ENCODE measurements at regions of chr21 and their contacts with region 1.

Region 1: DNA sequence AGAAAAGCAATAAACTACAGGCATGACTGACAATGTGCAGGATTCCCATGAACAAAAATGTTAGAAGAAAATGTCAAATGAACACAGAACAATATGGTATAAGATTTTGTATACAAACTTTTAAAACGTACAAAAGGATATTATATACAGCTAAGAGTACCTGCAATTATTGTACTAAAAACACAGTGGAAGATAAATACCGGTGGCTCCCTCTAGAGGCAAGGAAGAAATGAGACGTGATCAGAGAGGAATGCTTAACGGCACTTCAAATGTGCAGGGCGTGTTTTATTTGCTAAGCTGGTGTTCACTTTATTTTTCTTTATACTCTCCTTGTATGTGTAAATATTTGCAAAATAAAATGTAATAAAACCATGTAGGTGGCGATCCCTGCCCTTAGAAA is 191.8 kb upstream of the SAMSN1 start:
- DNase-seq: no peak
- ATAC-seq: peak; percentile 82
- H3K4me3 Mint-ChIP-seq: no peak overlapping the region
- H3K27ac Mint-ChIP-seq: no peak overlapping the region
- H3K4me1 Mint-ChIP-seq: peaks cover 35% of the 10 kb centered on the region
- H3K27me3 Mint-ChIP-seq: no peaks in the 10 kb centered on the region
- CTCF ChIP-seq: no peak

Region 2: DNA sequence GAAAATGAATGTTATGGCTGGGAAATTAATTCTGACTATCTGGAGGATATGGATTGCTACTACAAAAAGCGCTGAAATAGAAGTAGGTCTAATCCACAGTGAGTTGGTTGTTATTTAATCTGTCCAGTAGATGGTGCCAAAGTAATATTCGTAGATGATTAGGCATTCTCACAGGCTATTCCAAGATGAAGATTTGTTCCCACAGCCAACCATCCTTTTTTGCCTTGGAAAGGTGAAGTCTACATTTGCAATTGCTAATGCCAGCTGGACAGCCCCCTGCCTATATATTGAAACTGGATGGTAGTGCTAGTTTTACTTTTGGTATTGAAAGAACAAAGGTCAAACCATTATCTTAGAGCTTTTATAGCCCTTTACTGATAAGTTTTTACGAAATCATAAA is 478.2 kb before region 1 on chr21:
- CTCF ChIA-PET with region 1: no interaction called
- POLR2A ChIA-PET with region 1: no interaction called
- intact Hi-C with region 1: loop called (anchors 2 kb)
- DNase-seq: no peak
- ATAC-seq: no peak
- H3K4me3 Mint-ChIP-seq: no peak overlapping the region
- H3K27ac Mint-ChIP-seq: no peak overlapping the region
- H3K4me1 Mint-ChIP-seq: no peaks in the 10 kb centered on the region
- H3K27me3 Mint-ChIP-seq: peaks cover 2% of the 10 kb centered on the region
- CTCF ChIP-seq: no peak

Region 3: DNA sequence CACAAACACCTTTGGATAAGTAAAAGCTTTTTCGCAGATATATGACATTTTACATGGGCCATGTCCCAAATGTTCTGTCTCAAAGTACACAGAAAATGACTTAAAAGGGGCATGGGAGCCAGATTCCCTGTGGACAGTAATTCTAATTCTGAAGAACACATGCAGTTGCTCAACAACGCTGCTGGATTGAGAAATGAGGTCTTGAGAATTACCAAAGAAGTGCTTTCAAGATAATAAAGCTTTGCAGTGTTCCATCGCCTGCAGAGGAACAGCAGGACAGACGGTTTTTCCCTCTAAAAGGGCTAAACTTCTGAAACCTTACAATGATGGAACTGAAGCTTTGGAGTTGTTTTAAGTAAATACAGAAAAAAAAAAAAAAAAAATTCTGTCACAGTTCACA is 299.7 kb before region 1 on chr21:
- CTCF ChIA-PET with region 1: interaction called, 6 read pairs
- POLR2A ChIA-PET with region 1: no interaction called
- intact Hi-C with region 1: loop called (anchors 2 kb)
- DNase-seq: no peak
- ATAC-seq: no peak
- H3K4me3 Mint-ChIP-seq: no peak overlapping the region
- H3K27ac Mint-ChIP-seq: no peak overlapping the region
- H3K4me1 Mint-ChIP-seq: no peaks in the 10 kb centered on the region
- H3K27me3 Mint-ChIP-seq: peaks cover 3% of the 10 kb centered on the region
- CTCF ChIP-seq: no peak

Region 4: GRCh38 chr21:14545906-14546480 is 191.9 kb before region 1 on chr21 and contains the start of gene SAMSN1:
- CTCF ChIA-PET with region 1: interaction called, 6 read pairs
- POLR2A ChIA-PET with region 1: no interaction called
- intact Hi-C with region 1: loop called (anchors 1 kb)
- DNase-seq: no peak
- ATAC-seq: peak; percentile 93
- H3K4me3 Mint-ChIP-seq: peak within 1 kb of the TSS; percentile 88
- H3K27ac Mint-ChIP-seq: peak within 1 kb of the TSS; percentile 87
- H3K4me1 Mint-ChIP-seq: peaks cover 64% of the 10 kb centered on the region
- H3K27me3 Mint-ChIP-seq: no peaks in the 10 kb centered on the region
- CTCF ChIP-seq: no peak
- total RNA-seq, gene SAMSN1: 48.7 and 49.7 TPM in 2 replicates

Region 5: GRCh38 chr21:14762734-14763694 is 25.1 kb after region 1 on chr21:
- CTCF ChIA-PET with region 1: interaction called, 9 read pairs
- POLR2A ChIA-PET with region 1: interaction called, 5 read pairs
- intact Hi-C with region 1: loop called (anchors 1 kb)
- DNase-seq: no peak
- ATAC-seq: peak; percentile 95
- H3K4me3 Mint-ChIP-seq: no peak overlapping the region
- H3K27ac Mint-ChIP-seq: no peak overlapping the region
- H3K4me1 Mint-ChIP-seq: peaks cover 33% of the 10 kb centered on the region
- H3K27me3 Mint-ChIP-seq: no peaks in the 10 kb centered on the region
- CTCF ChIP-seq: no peak

Region 6: DNA sequence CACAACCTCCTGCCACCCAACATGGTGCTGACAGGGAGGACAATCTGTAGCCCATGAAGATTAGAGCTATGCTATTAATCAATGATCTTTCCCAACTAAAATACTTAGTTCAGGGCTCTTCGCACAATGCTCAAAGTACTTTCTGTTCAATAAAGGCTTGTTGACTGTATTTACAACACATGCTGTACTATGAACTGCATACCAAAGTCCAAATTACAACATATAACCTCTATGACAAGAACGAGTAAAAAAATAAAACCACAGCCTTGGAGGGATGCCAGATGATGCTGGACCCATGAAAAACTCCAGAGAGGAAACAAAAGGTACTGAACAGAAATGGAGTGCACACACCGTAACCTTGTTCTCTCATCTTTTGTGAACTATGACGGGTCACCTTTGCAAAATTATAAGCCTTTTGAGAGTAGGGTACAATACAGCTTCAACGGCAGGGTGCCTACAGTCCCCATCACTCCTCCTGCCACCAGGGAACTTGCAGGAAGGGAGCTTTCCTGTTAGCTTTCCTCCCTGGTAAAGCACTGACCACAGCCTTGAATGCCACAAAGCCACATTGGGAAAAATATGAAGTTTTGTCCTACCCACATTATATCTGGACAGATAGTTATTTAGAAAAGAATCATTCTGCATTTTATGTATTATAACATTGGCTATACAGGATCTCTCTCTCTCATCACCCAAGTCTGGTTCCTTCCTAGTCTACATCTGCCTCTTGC is 151.3 kb after region 1 on chr21:
- CTCF ChIA-PET with region 1: no interaction called
- POLR2A ChIA-PET with region 1: no interaction called
- intact Hi-C with region 1: no loop called
- DNase-seq: no peak
- ATAC-seq: no peak
- H3K4me3 Mint-ChIP-seq: no peak overlapping the region
- H3K27ac Mint-ChIP-seq: no peak overlapping the region
- H3K4me1 Mint-ChIP-seq: peaks cover 15% of the 10 kb centered on the region
- H3K27me3 Mint-ChIP-seq: no peaks in the 10 kb centered on the region
- CTCF ChIP-seq: no peak

Region 7: DNA sequence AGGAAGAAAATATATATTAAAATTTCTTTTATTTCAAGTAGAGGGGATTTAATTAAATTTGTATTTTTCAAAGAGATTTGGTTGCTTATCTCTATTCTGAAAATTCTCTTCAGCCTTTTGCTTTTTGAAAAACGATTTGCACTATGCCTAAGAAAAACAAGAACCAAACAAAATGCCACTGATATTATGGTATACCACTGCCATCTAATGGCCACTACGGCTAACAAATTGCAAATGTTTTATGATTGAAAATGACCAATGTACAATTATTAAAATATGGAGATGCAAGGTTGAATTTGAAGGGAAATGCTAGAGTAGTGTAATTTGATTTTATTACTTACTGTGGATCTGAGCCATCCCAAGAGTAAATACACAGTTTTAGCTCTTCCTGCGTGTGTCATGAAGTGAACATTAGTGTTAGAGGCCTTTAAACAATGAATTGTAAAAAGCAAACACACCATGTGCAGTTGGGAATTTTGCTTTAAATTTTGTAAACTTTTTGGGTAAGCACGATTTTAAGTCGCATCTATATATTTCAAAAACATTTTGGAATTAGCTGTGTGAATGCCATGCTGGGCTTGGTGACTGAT is 854.4 kb after region 1 on chr21:
- CTCF ChIA-PET with region 1: no interaction called
- POLR2A ChIA-PET with region 1: no interaction called
- intact Hi-C with region 1: loop called (anchors 10 kb)
- DNase-seq: no peak
- ATAC-seq: no peak
- H3K4me3 Mint-ChIP-seq: no peak overlapping the region
- H3K27ac Mint-ChIP-seq: no peak overlapping the region
- H3K4me1 Mint-ChIP-seq: no peaks in the 10 kb centered on the region
- H3K27me3 Mint-ChIP-seq: no peaks in the 10 kb centered on the region
- CTCF ChIP-seq: no peak

Measured in activated B cell treated with CpG ODN at 0.5 μM for 24 hours (primary cell).